GM13977 (cell line): ENCODE measurements at regions of chr6 and their contacts with region 1.

Region 1: DNA sequence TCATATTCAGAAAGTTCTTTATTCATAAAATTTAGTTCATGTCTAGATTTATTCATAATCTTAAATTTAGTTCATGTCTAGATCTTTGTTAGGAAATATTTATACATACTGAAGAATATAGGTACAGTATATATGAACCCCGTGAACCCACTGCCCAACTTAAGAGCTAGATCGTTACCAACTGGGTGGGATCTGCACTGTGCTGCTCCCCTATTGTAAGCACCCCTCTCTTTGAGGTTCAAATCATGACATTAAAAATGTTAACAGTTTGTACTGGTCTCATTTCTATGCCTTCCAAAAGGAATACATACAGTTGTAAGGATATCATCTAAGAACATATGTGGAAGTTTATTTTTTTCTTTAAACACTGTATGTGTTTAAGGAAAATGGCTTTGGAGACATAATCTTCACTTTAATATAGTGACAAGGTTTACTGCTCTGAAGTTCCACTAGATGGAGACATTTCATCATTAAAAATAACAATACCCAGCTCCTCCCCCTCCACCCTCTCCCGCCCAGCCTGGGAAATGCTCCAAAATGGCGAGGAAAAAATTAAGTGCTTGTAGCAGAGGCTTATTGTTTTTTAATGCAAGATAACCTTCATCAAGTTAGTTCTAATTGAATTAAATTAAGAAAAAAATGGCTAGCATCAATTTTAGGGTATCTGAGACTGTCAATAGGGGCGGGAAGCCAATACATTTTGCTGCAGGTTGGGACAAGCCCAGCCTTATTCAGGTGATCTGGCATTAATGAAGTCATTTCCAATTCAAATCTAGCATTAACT is 104.1 kb upstream of the TRAF3IP2 start:
- DNase-seq: peak; percentile 69
- CTCF ChIP-seq: peak; percentile 57

Region 2: GRCh38 chr6:111997078-111997852 is 287.5 kb after region 1 on chr6:
- in situ Hi-C with region 1: loop called (anchors 10 kb)
- DNase-seq: peak; percentile 57
- CTCF ChIP-seq: peak; percentile 94

Region 3: DNA sequence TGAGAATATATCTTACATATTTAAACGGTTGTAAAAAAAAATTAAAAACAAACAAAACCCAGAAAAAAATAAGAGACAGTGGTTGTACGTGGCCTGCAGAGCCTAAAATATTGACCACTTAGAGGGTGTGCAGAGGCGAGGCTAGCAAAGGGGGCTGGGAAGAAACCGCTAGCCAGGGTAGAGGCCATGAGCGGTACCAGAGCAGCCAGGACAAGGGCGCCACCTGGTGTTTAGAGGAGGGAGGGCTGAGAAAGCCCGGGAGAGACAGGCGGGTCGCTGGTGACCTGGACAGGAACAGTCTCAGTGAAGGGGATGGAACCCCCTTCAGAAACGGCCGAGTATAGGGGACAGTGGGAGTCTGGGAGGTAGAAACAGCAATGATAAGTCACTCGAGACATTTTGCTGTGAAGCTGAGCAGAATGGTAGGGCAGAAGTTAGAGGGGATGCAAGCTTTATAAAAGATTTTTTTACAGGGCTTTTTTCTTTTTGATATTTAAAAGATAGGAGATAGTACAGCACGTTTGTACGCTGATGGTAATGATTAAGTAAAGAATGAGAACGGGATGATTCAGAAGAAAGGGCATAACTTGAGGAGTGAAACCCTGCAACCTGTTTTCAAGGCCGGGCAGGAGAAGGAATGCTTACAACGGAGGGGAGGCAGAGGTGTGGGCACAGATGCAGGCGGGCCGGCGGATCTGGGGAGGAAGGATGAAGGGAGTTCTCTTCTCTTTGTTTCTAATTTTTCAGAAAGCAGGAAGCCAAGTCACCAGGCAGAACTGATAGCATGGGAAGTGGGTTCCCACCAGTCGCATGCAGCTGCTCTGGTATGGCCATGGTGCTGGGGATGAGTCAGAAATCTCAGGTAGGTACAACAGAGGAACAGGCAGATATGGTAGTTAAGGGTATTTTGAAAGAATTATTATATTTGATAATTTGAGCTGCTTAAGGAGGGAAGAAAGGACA is 453.8 kb after region 1 on chr6:
- in situ Hi-C with region 1: loop called (anchors 25 kb)
- DNase-seq: peak; percentile 60
- CTCF ChIP-seq: peak; percentile 94